Left cardiac atrium (tissue), 4 donors: ENCODE measurements at regions of chr11 and their contacts with region 1.

Region 1: GRCh38 chr11:99268886-99269285 is 248.1 kb downstream of the CNTN5 start:
- DNase-seq: no peak
- ATAC-seq: no peak

Region 2: GRCh38 chr11:99244613-99245012 is 24.3 kb before region 1 on chr11:
- intact Hi-C with region 1: loop called in 1 of 2 experiments (anchors 2 kb)
- DNase-seq: no peak
- ATAC-seq: no peak

Region 3: GRCh38 chr11:99383648-99384245 is 114.9 kb after region 1 on chr11:
- intact Hi-C with region 1: no loop called
- DNase-seq: no peak
- ATAC-seq: no peak

Region 4: DNA sequence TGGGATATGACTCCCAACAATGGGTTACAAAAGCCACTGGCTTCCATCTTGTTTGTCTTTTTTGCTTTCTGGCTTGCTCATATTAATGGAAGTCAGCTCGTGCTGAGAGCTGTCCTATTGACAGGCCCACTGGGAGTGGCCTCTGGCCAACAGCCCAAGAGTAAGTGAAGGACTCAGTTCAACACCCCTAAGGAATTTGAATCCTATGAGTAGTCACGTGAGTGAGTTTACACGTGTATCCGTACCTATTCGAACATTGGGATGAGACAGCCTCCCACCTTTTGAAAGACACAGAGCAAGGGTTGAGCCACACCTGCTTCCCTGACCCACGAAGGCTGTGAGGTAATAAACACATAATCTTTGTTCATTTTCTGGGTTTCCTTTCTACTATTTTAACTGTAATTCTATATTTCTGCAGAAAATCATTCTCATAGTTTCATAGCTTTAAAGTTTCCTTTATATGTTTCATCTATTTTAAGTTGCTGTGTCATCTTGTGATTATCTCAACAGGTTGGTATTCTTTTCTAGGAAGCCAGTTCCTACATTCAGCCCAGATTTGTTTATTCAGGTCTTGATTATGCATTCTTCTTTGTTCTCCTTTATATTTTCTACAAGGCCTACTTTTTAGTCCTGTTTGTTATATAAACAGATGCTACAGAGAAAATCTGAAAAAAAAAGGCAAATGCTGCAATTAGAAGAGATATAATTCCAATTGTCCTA is 554.1 kb after region 1 on chr11:
- intact Hi-C with region 1: no loop called
- DNase-seq: no peak
- ATAC-seq: no peak